BJ (cell line): ENCODE measurements at regions of chr1 and their contacts with region 1.

Region 1: DNA sequence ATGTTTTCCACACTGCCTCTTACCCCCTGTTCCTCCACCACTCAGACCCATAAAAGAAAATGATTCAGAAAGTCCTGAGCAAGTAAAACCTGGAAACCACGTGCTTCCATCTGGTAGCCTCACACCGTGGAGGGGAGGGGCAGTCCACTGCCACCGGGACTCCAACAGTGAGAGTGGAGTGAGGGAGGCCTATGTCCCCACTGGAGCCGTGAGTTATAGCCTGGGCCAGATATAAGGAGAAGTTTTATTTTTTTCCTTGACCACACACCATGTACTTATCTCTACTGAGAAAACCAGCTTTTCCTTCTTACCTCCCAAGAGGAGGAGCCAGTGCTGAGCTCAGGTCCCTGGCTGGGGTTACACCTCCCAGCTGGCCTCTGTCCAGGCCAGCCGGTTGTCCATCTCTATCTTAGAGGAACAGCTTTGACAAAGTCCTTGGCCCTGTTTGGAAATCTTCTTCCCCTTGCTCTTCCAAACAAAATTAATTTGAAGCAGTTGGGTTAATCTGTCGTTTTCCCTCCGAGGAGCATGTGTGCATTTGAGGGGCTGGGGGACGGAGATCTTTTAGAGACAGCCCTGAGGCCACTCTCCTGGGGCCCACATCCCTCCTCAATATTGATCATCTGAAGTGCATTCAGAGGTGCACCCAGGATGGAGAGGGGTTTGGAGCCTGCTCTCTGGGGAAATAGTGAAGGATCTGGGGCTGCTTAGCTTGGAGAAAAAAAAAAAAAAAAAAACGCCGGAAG is 49.1 kb upstream of the SERBP1 start:
- DNase-seq: no peak
- H3K4me3 ChIP-seq: no peak overlapping the region
- H3K27me3 ChIP-seq: peaks cover 2% of the 10 kb centered on the region
- CTCF ChIP-seq: no peak

Region 2: GRCh38 chr1:67261680-67262079 is 217.6 kb before region 1 on chr1:
- CTCF ChIA-PET with region 1: no interaction called
- POLR2A ChIA-PET with region 1: no interaction called
- DNase-seq: no peak
- H3K4me3 ChIP-seq: no peak overlapping the region
- H3K27me3 ChIP-seq: 0 out of 2 replicates have a peak, but pooled peaks cover 2% of the 10 kb centered on the region
- CTCF ChIP-seq: no peak

Region 3: GRCh38 chr1:67367370-67368045 is 111.8 kb before region 1 on chr1:
- CTCF ChIA-PET with region 1: no interaction called
- POLR2A ChIA-PET with region 1: no interaction called
- DNase-seq: no peak
- H3K4me3 ChIP-seq: no peak overlapping the region
- H3K27me3 ChIP-seq: no peaks in the 10 kb centered on the region
- CTCF ChIP-seq: no peak

Region 4: DNA sequence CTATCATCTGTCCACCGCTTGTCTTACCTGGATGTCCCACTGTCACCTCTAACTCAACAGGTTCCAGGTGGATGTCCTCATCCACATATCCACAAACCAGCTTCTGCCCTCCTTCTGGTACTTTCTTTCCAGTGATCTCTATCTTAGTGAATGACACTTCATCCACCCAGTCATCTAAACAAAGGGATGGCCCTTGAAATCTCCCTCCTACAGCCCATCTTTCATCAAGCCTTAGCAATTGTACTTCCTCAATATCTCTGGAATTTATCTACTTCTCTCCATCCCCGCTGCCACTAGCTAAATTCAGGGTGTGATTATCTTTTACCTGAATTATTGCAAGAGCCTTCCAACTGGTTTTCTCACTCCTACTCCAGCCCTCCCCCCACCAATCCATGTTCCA is 15.2 kb before region 1 on chr1:
- CTCF ChIA-PET with region 1: interaction called, 3 read pairs
- POLR2A ChIA-PET with region 1: interaction called, 32 read pairs
- DNase-seq: no peak
- H3K4me3 ChIP-seq: no peak overlapping the region
- H3K27me3 ChIP-seq: peaks cover 5% of the 10 kb centered on the region; the same call in 1 of the 2 replicates
- CTCF ChIP-seq: no peak